ENCODE measurements at regions of chr10 and their contacts with region 1.

Region 1: GRCh38 chr10:127869329-127869728 is 23.4 kb downstream of the CLRN3 start:
- DNase-seq: no peak
- H3K4me3 ChIP-seq: no peak overlapping the region
- H3K27ac ChIP-seq: no peak overlapping the region
- H3K27me3 ChIP-seq: no peaks in the 10 kb centered on the region
- CTCF ChIP-seq: no peak

Region 2: GRCh38 chr10:127853868-127854768 is 15.2 kb before region 1 on chr10:
- CTCF ChIA-PET with region 1: interaction called, 10 read pairs
- POLR2A ChIA-PET with region 1: no interaction called
- DNase-seq: peak; percentile 7
- H3K4me3 ChIP-seq: no peak overlapping the region
- H3K27ac ChIP-seq: no peak overlapping the region
- H3K27me3 ChIP-seq: no peaks in the 10 kb centered on the region
- CTCF ChIP-seq: peak; percentile 75

Region 3: GRCh38 chr10:127906548-127907377 is 37.4 kb after region 1 on chr10 and contains the start of gene PTPRE:
- CTCF ChIA-PET with region 1: no interaction called
- POLR2A ChIA-PET with region 1: no interaction called
- DNase-seq: no peak
- H3K4me3 ChIP-seq: no peak within 1 kb of the TSS
- H3K27ac ChIP-seq: no peak within 1 kb of the TSS
- H3K27me3 ChIP-seq: peaks cover 4% of the 10 kb centered on the region
- CTCF ChIP-seq: no peak; the same call in 1 of the 2 replicates
- polyA plus RNA-seq, gene PTPRE: 0.04 and 0.38 TPM in 2 replicates

Measured in AG04450 (cell line).